Lower lobe of right lung (tissue), 2 donors: ENCODE measurements at regions of chr2 and their contacts with region 1.

Region 1: GRCh38 chr2:71510196-71510807 is 56.9 kb downstream of the DYSF start:
- DNase-seq: peak; percentile 79
- ATAC-seq: peak; percentile 65 to 77
- H3K4me3 ChIP-seq: no peak overlapping the region
- H3K27ac ChIP-seq: no peak overlapping the region
- H3K4me1 ChIP-seq: peaks cover 5% of the 10 kb centered on the region
- H3K27me3 ChIP-seq: no peaks in the 10 kb centered on the region
- CTCF ChIP-seq: peak; percentile 93

Region 2: DNA sequence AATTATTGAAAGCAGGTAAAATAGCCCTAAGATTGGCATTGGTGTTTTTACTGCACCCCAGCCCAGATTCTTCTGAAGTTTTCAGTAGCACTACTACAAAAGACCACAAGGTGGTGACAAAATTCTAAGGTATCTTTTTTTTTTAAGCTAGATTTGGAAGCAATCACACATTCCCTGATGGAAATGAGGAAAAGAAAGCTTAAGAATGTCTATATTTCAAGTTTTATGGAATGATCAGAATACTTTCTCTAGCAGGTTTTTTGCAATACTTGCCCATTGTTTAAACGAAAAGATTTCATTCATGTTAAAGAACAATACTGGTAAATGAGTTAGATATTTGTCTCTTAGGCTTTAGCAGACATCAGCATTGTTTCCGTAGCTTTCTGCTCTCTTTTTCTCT is 210.8 kb before region 1 on chr2:
- intact Hi-C with region 1: loop called (anchors 10 kb)
- DNase-seq: no peak
- ATAC-seq: no peak
- H3K4me3 ChIP-seq: no peak overlapping the region
- H3K27ac ChIP-seq: no peak overlapping the region
- H3K4me1 ChIP-seq: no peaks in the 10 kb centered on the region
- H3K27me3 ChIP-seq: no peaks in the 10 kb centered on the region
- CTCF ChIP-seq: peak; percentile 75

Region 3: DNA sequence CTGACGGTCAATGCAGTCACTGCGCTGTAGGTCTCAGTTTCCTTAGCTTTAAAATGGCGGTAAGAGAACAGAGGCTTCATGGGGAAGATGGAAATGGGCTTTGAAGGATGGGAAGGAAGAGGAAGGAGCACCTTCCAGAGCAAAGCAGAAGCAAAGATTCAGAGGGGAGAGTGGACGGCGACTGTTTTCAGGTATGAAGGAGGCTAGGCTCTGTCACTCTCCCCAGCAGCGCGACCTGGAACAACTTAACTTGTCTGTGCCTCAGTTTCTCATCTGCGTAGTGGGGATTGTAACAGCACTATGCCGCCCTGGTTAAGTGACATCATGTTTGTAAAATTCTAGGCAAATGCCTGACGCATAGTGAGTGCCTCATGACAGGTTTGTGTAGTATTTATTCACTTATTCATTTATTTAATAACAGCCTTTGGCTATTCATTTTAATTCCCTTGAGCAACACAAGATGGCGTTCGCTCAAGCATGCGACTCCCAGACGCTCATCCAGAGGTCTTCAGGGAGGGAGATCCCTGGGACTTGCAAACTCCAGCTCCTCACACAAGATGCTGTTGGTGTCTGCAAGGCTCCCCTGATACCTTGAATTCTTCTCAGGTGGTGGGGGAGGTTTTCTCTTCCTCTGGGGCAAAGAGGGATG is 279.4 kb after region 1 on chr2:
- intact Hi-C with region 1: no loop called
- DNase-seq: no peak
- ATAC-seq: no peak
- H3K4me3 ChIP-seq: no peak overlapping the region
- H3K27ac ChIP-seq: no peak overlapping the region
- H3K4me1 ChIP-seq: no peaks in the 10 kb centered on the region
- H3K27me3 ChIP-seq: no peaks in the 10 kb centered on the region
- CTCF ChIP-seq: no peak